Caco-2 (cell line): ENCODE measurements at regions of chr2 and their contacts with region 1.

Region 1: GRCh38 chr2:47225061-47225859 is 70.2 kb upstream of the STPG4 start:
- DNase-seq: peak; percentile 62 to 82
- H3K4me3 ChIP-seq: no peak overlapping the region
- H3K4me3 Mint-ChIP-seq: no peak overlapping the region
- H3K27ac Mint-ChIP-seq: peak overlapping the region; percentile 73
- H3K4me1 ChIP-seq: peaks cover 44% of the 10 kb centered on the region
- H3K4me1 Mint-ChIP-seq: peaks cover 49% of the 10 kb centered on the region
- H3K27me3 ChIP-seq: no peaks in the 10 kb centered on the region
- H3K27me3 Mint-ChIP-seq: no peaks in the 10 kb centered on the region
- CTCF ChIP-seq: no peak

Region 2: GRCh38 chr2:47155091-47155876 is 70.0 kb before region 1 on chr2 and contains the start of gene STPG4:
- CTCF ChIA-PET with region 1: no interaction called
- POLR2A ChIA-PET with region 1: no interaction called
- intact Hi-C with region 1: no loop called
- DNase-seq: no peak
- H3K4me3 ChIP-seq: no peak within 1 kb of the TSS
- H3K4me3 Mint-ChIP-seq: no peak within 1 kb of the TSS
- H3K27ac Mint-ChIP-seq: peak within 1 kb of the TSS; percentile 77
- H3K4me1 ChIP-seq: peaks cover 16% of the 10 kb centered on the region; the same call in 1 of the 2 replicates
- H3K4me1 Mint-ChIP-seq: peaks cover 7% of the 10 kb centered on the region
- H3K27me3 ChIP-seq: no peaks in the 10 kb centered on the region
- H3K27me3 Mint-ChIP-seq: no peaks in the 10 kb centered on the region
- CTCF ChIP-seq: no peak
- total RNA-seq, gene STPG4: 0.46 and 0.79 TPM in 2 replicates

Region 3: DNA sequence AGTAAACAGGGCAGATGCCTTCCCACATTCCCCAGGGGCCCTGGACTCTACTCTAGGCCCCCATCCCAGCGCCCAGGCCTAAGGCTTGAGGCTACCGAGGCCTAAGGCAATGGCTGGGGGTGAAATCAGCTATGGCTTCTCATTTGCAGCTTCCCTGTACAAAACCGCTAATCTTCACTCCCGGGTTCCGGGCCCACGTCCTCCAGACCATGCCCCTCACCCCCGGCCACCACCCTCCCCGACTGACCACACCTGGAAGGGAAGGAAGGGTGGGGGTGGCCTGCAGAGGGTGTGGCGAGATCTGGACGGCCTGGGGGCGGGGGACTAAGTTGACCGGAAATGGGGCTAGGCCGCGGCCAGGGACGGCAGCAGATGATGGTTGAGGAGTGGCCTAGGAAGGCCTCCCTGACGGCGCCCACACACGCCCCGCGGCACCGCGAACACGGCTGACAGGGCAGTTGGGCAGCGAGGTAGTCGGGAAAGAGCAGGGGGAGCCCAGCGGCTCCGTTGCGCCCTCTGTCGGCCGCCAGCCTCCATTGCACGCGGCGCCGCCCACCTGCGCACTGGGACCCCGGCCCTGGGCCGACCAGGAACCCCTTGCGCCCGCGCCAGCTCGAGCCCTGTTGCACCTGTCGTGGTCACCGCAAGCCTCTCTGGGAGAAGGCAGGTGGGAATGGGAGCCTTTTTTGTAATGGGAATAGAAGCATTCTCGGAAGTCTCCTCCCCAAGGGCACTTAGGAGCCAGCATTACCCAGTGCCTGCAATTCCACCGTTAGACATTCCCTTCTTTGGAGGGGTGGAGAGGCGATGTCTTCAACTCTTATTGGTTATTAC is 47.0 kb after region 1 on chr2:
- CTCF ChIA-PET with region 1: no interaction called
- POLR2A ChIA-PET with region 1: no interaction called
- intact Hi-C with region 1: loop called (anchors 5 kb)
- DNase-seq: peak; percentile 66 to 77
- H3K4me3 ChIP-seq: peak overlapping the region; percentile 14
- H3K4me3 Mint-ChIP-seq: peak overlapping the region; percentile 73
- H3K27ac Mint-ChIP-seq: peak overlapping the region; percentile 69
- H3K4me1 ChIP-seq: peaks cover 36% of the 10 kb centered on the region
- H3K4me1 Mint-ChIP-seq: peaks cover 27% of the 10 kb centered on the region
- H3K27me3 ChIP-seq: no peaks in the 10 kb centered on the region
- H3K27me3 Mint-ChIP-seq: no peaks in the 10 kb centered on the region
- CTCF ChIP-seq: peak; percentile 60 to 75

Region 4: DNA sequence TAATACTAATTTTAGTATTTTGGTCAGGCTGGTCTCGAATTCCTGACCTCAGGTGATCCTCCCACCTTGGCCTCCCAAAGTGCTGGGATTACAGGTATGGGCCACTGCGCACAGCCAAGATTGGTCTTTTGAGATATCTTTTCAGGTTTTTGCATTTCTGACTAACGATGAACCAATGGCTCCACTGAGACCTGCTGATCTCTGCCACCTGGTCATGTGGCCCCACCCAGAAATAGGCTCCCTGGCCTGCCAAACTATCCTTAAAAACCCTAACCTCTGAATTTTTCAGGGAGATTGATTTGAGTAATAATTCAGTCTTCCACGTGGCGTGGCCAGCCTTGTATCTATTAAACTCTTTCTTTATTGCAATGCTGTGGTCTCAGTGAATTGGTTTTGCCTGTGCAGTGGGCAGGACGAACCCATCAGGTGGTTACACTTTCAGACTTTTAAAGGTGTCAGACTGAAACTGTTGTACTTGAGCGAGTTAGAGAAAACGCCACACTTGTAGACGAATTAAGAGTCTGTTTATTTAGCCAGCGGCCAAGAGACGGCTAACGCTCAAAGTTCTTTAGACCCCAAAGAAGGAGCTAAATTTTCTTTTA is 471.8 kb after region 1 on chr2:
- CTCF ChIA-PET with region 1: no interaction called
- POLR2A ChIA-PET with region 1: no interaction called
- intact Hi-C with region 1: no loop called
- DNase-seq: no peak
- H3K4me3 ChIP-seq: no peak overlapping the region
- H3K4me3 Mint-ChIP-seq: no peak overlapping the region
- H3K27ac Mint-ChIP-seq: no peak overlapping the region
- H3K4me1 ChIP-seq: peaks cover 18% of the 10 kb centered on the region
- H3K4me1 Mint-ChIP-seq: peaks cover 25% of the 10 kb centered on the region
- H3K27me3 ChIP-seq: no peaks in the 10 kb centered on the region
- H3K27me3 Mint-ChIP-seq: no peaks in the 10 kb centered on the region
- CTCF ChIP-seq: no peak